ENCODE measurements at regions of chr2 and their contacts with region 1.

Region 1: DNA sequence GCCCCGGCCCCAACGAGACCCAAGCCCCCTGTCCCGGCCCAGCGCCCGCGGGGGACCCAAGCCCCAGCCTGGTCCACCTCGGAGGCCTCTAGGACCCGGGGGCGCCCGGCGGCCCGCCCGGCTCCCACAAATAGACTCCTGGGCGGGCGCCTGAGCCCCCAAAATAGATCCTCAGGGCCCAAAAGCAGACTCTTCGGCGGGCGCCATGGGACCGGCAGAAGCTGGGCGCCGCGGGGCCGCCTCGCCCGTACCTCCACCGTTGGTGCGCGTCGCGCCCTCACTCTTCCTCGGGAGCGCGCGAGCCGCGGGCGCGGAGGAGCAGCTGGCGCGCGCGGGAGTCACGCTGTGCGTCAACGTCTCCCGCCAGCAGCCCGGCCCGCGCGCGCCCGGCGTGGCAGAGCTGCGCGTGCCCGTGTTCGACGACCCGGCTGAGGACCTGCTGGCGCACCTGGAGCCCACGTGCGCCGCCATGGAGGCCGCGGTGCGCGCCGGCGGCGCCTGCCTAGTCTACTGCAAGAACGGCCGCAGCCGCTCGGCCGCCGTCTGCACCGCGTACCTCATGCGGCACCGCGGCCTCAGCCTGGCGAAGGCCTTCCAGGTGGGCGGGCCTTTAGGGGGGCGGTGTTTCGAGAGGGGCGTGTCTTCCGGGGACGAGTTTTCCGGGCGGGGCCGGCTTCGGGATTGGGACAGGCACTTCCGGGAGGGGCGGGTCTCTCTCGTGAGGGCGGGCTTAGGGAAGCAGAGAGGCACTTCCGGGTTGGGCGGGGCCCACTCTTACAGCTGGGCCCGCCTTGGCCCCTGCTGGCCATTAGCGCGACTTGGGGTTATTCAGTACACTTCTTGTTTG is 546 bp downstream of the DUSP28 start:
- DNase-seq: peak; percentile 99 to 100 (median 100)
- H3K4me3 ChIP-seq: peak overlapping the region; percentile 63
- H3K4me3 Mint-ChIP-seq: peak overlapping the region; percentile 86 to 95 (median 90)
- H3K27ac ChIP-seq: peak overlapping the region; percentile 87
- H3K27ac Mint-ChIP-seq: peak overlapping the region; percentile 46 to 97 (median 90)
- H3K4me1 ChIP-seq: peaks cover 74% of the 10 kb centered on the region
- H3K4me1 Mint-ChIP-seq: peaks cover 71 to 86% (median 78%) of the 10 kb centered on the region in 3 donors
- H3K27me3 ChIP-seq: no peaks in the 10 kb centered on the region
- H3K27me3 Mint-ChIP-seq: no peaks in the 10 kb centered on the region

Region 2: GRCh38 chr2:240579771-240580614 is 19.3 kb after region 1 on chr2:
- CTCF ChIA-PET with region 1: interaction called, 68 read pairs
- POLR2A ChIA-PET with region 1: interaction called, 99 read pairs
- DNase-seq: peak; percentile 70 to 89 (median 76)
- H3K4me3 ChIP-seq: no peak overlapping the region
- H3K4me3 Mint-ChIP-seq: peak overlapping the region in 6 of 7 donors; percentile 8 to 69 (median 56)
- H3K27ac ChIP-seq: no peak overlapping the region
- H3K27ac Mint-ChIP-seq: peak overlapping the region; percentile 59 to 91 (median 84)
- H3K4me1 ChIP-seq: peaks cover 29% of the 10 kb centered on the region
- H3K4me1 Mint-ChIP-seq: peaks cover 33 to 53% (median 49%) of the 10 kb centered on the region in 3 donors
- H3K27me3 ChIP-seq: no peaks in the 10 kb centered on the region
- H3K27me3 Mint-ChIP-seq: no peaks in the 10 kb centered on the region

Region 3: DNA sequence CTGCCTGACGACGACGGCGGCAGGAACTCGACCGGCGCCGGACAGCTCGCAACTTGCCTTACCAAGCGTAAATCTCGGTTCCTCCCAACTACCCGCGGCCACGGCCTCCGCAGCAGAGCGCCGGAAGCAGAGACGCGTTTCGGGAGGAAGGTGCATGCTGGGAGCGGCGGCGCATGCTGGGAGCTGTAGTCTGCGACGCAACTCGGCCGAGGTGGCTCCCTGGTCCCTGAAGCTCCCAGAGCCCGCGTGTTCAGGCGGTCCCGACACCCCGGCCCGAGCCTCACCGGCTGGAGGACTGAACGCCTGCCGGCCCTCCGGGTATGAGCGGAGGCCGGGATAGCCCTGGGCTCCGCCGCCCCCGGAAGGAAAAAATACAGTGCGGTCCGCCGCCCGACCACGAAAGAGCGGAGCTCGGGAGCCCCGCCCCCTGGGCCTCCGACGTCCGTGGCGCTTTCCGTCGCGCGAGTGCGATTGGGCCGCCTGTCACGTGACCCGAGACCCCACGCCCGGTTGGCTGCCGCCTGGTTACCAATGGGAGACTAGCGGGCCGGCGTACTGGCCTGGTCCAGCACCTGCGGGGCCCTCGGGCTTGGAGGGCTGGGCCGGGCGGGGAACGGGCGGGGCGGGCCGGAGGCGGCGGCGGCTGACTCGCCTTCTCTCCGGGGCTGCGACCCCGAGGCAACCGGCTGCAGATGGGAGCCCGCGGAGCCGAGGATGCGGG is 25.7 kb after region 1 on chr2 and contains the start of gene CAPN10:
- CTCF ChIA-PET with region 1: interaction called, 68 read pairs
- POLR2A ChIA-PET with region 1: interaction called, 99 read pairs
- DNase-seq: peak; percentile 95 to 97 (median 96)
- H3K4me3 ChIP-seq: peak within 1 kb of the TSS; percentile 97
- H3K4me3 Mint-ChIP-seq: peak within 1 kb of the TSS; percentile 94 to 98 (median 95)
- H3K27ac ChIP-seq: peak within 1 kb of the TSS; percentile 80
- H3K27ac Mint-ChIP-seq: peak within 1 kb of the TSS; percentile 92 to 99 (median 98)
- H3K4me1 ChIP-seq: peaks cover 35% of the 10 kb centered on the region
- H3K4me1 Mint-ChIP-seq: peaks cover 47 to 73% (median 55%) of the 10 kb centered on the region in 3 donors
- H3K27me3 ChIP-seq: no peaks in the 10 kb centered on the region
- H3K27me3 Mint-ChIP-seq: peaks cover 0 to 2% of the 10 kb centered on the region in 2 donors
- total RNA-seq, gene CAPN10: 36.1 to 40.5 TPM